Ovary (tissue), 10 donors: ENCODE measurements at regions of chr4 and their contacts with region 1.

Region 1: GRCh38 chr4:56149591-56149990 is 200.8 kb downstream of the CEP135 start:
- DNase-seq: no peak
- H3K4me3 ChIP-seq: no peak overlapping the region
- H3K27ac ChIP-seq: no peak overlapping the region
- H3K4me1 ChIP-seq: peaks cover 3% of the 10 kb centered on the region
- H3K27me3 ChIP-seq: no peaks in the 10 kb centered on the region
- CTCF ChIP-seq: no peak
- EP300 ChIP-seq: no peak
- POLR2A ChIP-seq: no peak

Region 2: DNA sequence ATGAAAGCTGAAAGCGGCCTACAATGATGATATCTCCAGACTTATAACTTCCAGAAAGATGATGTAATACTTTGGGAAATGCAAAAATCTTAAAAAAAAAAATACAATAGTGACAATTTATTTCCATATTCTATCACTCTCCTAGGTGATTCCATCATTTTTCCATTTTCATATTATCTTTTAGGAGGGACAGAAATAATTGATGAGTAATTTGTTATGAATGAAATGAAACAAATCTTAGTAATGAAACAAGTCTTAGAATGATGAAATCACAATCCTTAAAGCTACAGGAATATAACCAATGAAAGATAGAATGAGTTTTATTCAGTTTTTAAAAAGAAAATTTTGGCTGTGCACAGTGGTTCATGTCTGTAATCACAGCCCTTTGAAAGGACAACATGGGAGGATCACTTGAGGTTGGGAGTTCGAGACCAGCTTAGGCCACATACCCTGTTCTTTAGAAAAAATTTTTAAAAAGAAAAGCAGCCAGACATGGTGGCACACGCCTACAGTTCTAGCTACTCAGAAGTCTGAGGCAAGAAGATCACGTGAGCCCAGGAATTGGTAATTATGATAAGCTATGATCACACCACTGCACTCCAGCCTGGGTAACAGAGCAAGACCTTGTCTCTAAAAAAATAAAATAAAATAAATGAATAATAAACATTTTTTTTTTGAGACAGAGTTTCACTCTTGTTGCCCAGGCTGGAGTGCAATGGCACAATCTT is 624.6 kb before region 1 on chr4:
- intact Hi-C with region 1: no loop called
- DNase-seq: no peak
- H3K4me3 ChIP-seq: no peak overlapping the region
- H3K27ac ChIP-seq: no peak overlapping the region
- H3K4me1 ChIP-seq: no peaks in the 10 kb centered on the region
- H3K27me3 ChIP-seq: no peaks in the 10 kb centered on the region
- CTCF ChIP-seq: no peak
- EP300 ChIP-seq: no peak
- POLR2A ChIP-seq: no peak

Region 3: GRCh38 chr4:55980725-55981124 is 168.9 kb before region 1 on chr4:
- intact Hi-C with region 1: no loop called
- DNase-seq: no peak
- H3K4me3 ChIP-seq: no peak overlapping the region
- H3K27ac ChIP-seq: no peak overlapping the region
- H3K4me1 ChIP-seq: no peaks in the 10 kb centered on the region
- H3K27me3 ChIP-seq: no peaks in the 10 kb centered on the region
- CTCF ChIP-seq: no peak
- EP300 ChIP-seq: no peak
- POLR2A ChIP-seq: no peak

Region 4: GRCh38 chr4:56132835-56133234 is 16.8 kb before region 1 on chr4:
- intact Hi-C with region 1: loop called in 1 of 4 experiments (anchors 2 kb)
- DNase-seq: no peak
- H3K4me3 ChIP-seq: no peak overlapping the region
- H3K27ac ChIP-seq: no peak overlapping the region
- H3K4me1 ChIP-seq: peaks cover 3% of the 10 kb centered on the region
- H3K27me3 ChIP-seq: no peaks in the 10 kb centered on the region
- CTCF ChIP-seq: no peak
- EP300 ChIP-seq: no peak
- POLR2A ChIP-seq: no peak